GM12878 (cell line): ENCODE measurements at regions of chr7 and their contacts with region 1.

Region 1: DNA sequence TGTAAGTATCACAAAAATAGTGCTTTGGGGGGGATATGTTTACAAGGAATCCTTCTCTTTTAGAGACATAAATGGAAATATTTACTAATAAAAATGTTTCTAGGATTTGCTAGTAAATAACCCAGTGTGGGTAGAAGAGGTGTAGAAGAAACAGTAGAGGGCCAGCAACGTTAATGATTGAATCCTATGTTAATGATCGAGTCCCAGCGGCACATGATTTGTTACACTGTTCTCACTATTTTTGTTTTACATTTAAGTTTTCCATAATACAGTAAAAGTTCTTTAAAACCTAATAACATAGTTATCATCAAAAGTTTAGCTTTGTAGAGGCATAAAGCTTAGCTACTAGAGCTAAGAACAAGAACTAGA is 66.0 kb downstream of the UBE2H start:
- DNase-seq: no peak
- ATAC-seq: no peak
- H3K4me3 ChIP-seq: no peak overlapping the region
- H3K27ac ChIP-seq: no peak overlapping the region
- H3K4me1 ChIP-seq: no peaks in the 10 kb centered on the region
- H3K27me3 ChIP-seq: no peaks in the 10 kb centered on the region
- CTCF ChIP-seq: no peak
- EP300 ChIP-seq: no peak
- POLR2A ChIP-seq: no peak
- RAD21 ChIP-seq: no peak

Region 2: GRCh38 chr7:129816742-129817141 is 70.1 kb before region 1 on chr7:
- CTCF ChIA-PET with region 1: no interaction called
- POLR2A ChIA-PET with region 1: interaction called, 11 read pairs
- RAD21 ChIA-PET with region 1: no interaction called
- SMC1A ChIA-PET with region 1: no interaction called
- in situ Hi-C with region 1: no loop called
- intact Hi-C with region 1: no loop called
- DNase-seq: no peak
- ATAC-seq: no peak
- H3K4me3 ChIP-seq: no peak overlapping the region
- H3K27ac ChIP-seq: no peak overlapping the region
- H3K4me1 ChIP-seq: no peaks in the 10 kb centered on the region
- H3K27me3 ChIP-seq: no peaks in the 10 kb centered on the region
- CTCF ChIP-seq: no peak
- EP300 ChIP-seq: no peak
- POLR2A ChIP-seq: no peak
- RAD21 ChIP-seq: no peak

Region 3: GRCh38 chr7:130047821-130048220 is 161.0 kb after region 1 on chr7:
- CTCF ChIA-PET with region 1: no interaction called
- POLR2A ChIA-PET with region 1: no interaction called
- RAD21 ChIA-PET with region 1: no interaction called
- SMC1A ChIA-PET with region 1: no interaction called
- in situ Hi-C with region 1: no loop called
- intact Hi-C with region 1: no loop called
- DNase-seq: no peak
- ATAC-seq: no peak
- H3K4me3 ChIP-seq: no peak overlapping the region
- H3K27ac ChIP-seq: no peak overlapping the region
- H3K4me1 ChIP-seq: no peaks in the 10 kb centered on the region
- H3K27me3 ChIP-seq: no peaks in the 10 kb centered on the region
- CTCF ChIP-seq: no peak
- EP300 ChIP-seq: no peak
- POLR2A ChIP-seq: no peak
- RAD21 ChIP-seq: no peak